ENCODE measurements at regions of chr6 and their contacts with region 1.

Region 1: GRCh38 chr6:70673601-70674000 is 5.9 kb downstream of the SMAP1 start:
- DNase-seq: no peak
- ATAC-seq: peak in 1 of 4 experiments; percentile 41
- H3K4me3 ChIP-seq: no peak overlapping the region
- H3K4me3 Mint-ChIP-seq: no peak overlapping the region
- H3K27ac ChIP-seq: no peak overlapping the region
- H3K27ac Mint-ChIP-seq: no peak overlapping the region
- H3K4me1 ChIP-seq: peaks cover 6 to 18% of the 10 kb centered on the region in 2 experiments
- H3K4me1 Mint-ChIP-seq: peaks cover 69 to 76% (median 75%) of the 10 kb centered on the region in 3 donors
- H3K27me3 ChIP-seq: no peaks in the 10 kb centered on the region
- H3K27me3 Mint-ChIP-seq: no peaks in the 10 kb centered on the region

Region 2: GRCh38 chr6:70456735-70457134 is 216.9 kb before region 1 on chr6:
- CTCF ChIA-PET with region 1: no interaction called
- POLR2A ChIA-PET with region 1: no interaction called
- DNase-seq: no peak
- ATAC-seq: no peak
- H3K4me3 ChIP-seq: no peak overlapping the region
- H3K4me3 Mint-ChIP-seq: no peak overlapping the region
- H3K27ac ChIP-seq: no peak overlapping the region
- H3K27ac Mint-ChIP-seq: no peak overlapping the region
- H3K4me1 ChIP-seq: no peaks in the 10 kb centered on the region
- H3K4me1 Mint-ChIP-seq: peaks cover 0 to 1% (median 0%) of the 10 kb centered on the region in 3 donors
- H3K27me3 ChIP-seq: no peaks in the 10 kb centered on the region
- H3K27me3 Mint-ChIP-seq: no peaks in the 10 kb centered on the region

Region 3: GRCh38 chr6:70638468-70638867 is 35.1 kb before region 1 on chr6:
- CTCF ChIA-PET with region 1: no interaction called
- POLR2A ChIA-PET with region 1: no interaction called
- DNase-seq: no peak
- ATAC-seq: no peak
- H3K4me3 ChIP-seq: no peak overlapping the region
- H3K4me3 Mint-ChIP-seq: no peak overlapping the region
- H3K27ac ChIP-seq: no peak overlapping the region
- H3K27ac Mint-ChIP-seq: no peak overlapping the region
- H3K4me1 ChIP-seq: no peaks in the 10 kb centered on the region
- H3K4me1 Mint-ChIP-seq: peaks cover 0 to 2% (median 0%) of the 10 kb centered on the region in 3 donors
- H3K27me3 ChIP-seq: no peaks in the 10 kb centered on the region
- H3K27me3 Mint-ChIP-seq: no peaks in the 10 kb centered on the region

Region 4: DNA sequence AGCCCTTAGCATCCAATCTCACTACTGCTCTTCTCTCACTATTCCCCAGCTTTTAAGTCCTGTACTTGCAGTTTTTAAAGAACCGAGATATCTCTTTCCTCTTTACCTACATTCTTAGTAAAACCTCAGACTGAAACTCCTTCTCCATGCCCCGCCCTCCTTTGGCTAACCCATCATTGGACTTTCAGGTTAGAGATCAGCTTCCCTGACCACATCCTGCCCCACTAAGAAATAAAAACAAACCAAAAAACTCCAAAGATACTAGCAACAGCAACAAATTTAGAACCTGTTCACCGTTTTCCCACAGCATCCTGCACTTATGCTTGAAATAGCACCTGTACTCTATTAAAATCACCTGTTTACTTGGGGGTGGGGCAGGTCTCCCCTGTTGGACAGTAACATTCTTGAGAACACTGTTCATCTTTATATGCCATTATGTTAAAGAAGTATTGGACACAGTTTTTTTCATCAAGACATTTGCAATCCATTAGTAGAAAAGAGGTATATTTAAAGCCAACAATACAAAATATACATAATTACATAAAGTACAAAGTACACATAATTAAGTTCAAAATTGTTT is 22.2 kb before region 1 on chr6:
- CTCF ChIA-PET with region 1: interaction called in 1 of 2 experiments, 3 read pairs
- POLR2A ChIA-PET with region 1: interaction called in 1 of 2 experiments, 13 read pairs
- DNase-seq: peak in 34 of 35 experiments; percentile 15 to 63 (median 42)
- ATAC-seq: peak; percentile 88 to 97 (median 92)
- H3K4me3 ChIP-seq: no peak overlapping the region
- H3K4me3 Mint-ChIP-seq: peak overlapping the region; percentile 40 to 59 (median 59)
- H3K27ac ChIP-seq: peak overlapping the region; percentile 54
- H3K27ac Mint-ChIP-seq: peak overlapping the region; percentile 92
- H3K4me1 ChIP-seq: peaks cover 17 to 18% of the 10 kb centered on the region in 2 experiments
- H3K4me1 Mint-ChIP-seq: peaks cover 27 to 35% (median 30%) of the 10 kb centered on the region in 3 donors
- H3K27me3 ChIP-seq: no peaks in the 10 kb centered on the region
- H3K27me3 Mint-ChIP-seq: no peaks in the 10 kb centered on the region

Region 5: GRCh38 chr6:70714716-70715257 is 41.2 kb after region 1 on chr6:
- CTCF ChIA-PET with region 1: no interaction called
- POLR2A ChIA-PET with region 1: no interaction called
- DNase-seq: no peak
- ATAC-seq: no peak
- H3K4me3 ChIP-seq: no peak overlapping the region
- H3K4me3 Mint-ChIP-seq: no peak overlapping the region
- H3K27ac ChIP-seq: no peak overlapping the region
- H3K27ac Mint-ChIP-seq: no peak overlapping the region
- H3K4me1 ChIP-seq: peaks cover 5 to 11% of the 10 kb centered on the region in 2 experiments
- H3K4me1 Mint-ChIP-seq: peaks cover 53 to 62% (median 59%) of the 10 kb centered on the region in 3 donors
- H3K27me3 ChIP-seq: no peaks in the 10 kb centered on the region
- H3K27me3 Mint-ChIP-seq: no peaks in the 10 kb centered on the region

Region 6: DNA sequence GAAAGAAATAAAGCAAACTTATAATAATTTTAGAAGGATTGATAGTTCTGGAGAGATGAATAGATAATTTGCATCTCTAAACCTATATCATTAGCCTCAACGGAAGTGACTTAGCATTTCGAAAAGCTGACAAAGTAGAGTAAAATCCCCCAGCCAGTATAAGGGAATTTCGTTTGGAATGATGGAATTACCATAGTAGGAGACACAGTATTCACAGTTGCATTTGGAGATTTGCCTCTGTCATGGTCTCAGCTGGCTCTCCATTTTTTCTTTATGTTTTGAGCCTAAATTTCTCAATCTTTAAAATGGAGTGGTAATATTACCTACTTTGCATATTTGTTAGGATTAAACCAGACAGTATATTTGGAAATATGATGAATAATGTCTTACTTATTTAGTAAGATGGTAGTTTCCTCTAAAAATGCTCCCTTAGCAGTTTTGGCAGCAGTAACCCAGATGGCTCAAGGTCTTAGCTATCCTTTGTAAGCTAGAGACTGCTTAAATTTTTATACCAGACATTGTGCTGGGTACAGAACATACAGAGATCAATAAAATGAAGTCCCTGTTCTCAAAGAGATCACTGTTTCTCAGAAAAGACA is 52.3 kb after region 1 on chr6:
- CTCF ChIA-PET with region 1: interaction called in 1 of 2 experiments, 10 read pairs
- POLR2A ChIA-PET with region 1: no interaction called
- DNase-seq: no peak
- ATAC-seq: no peak
- H3K4me3 ChIP-seq: no peak overlapping the region
- H3K4me3 Mint-ChIP-seq: no peak overlapping the region
- H3K27ac ChIP-seq: no peak overlapping the region
- H3K27ac Mint-ChIP-seq: no peak overlapping the region
- H3K4me1 ChIP-seq: peaks cover 0 to 2% of the 10 kb centered on the region in 2 experiments
- H3K4me1 Mint-ChIP-seq: peaks cover 47 to 68% (median 65%) of the 10 kb centered on the region in 3 donors
- H3K27me3 ChIP-seq: no peaks in the 10 kb centered on the region
- H3K27me3 Mint-ChIP-seq: no peaks in the 10 kb centered on the region

Measured in T-cell (primary cell).